Common myeloid progenitor, CD34-positive (primary cell): ENCODE measurements at regions of chr3 and their contacts with region 1.

Region 1: DNA sequence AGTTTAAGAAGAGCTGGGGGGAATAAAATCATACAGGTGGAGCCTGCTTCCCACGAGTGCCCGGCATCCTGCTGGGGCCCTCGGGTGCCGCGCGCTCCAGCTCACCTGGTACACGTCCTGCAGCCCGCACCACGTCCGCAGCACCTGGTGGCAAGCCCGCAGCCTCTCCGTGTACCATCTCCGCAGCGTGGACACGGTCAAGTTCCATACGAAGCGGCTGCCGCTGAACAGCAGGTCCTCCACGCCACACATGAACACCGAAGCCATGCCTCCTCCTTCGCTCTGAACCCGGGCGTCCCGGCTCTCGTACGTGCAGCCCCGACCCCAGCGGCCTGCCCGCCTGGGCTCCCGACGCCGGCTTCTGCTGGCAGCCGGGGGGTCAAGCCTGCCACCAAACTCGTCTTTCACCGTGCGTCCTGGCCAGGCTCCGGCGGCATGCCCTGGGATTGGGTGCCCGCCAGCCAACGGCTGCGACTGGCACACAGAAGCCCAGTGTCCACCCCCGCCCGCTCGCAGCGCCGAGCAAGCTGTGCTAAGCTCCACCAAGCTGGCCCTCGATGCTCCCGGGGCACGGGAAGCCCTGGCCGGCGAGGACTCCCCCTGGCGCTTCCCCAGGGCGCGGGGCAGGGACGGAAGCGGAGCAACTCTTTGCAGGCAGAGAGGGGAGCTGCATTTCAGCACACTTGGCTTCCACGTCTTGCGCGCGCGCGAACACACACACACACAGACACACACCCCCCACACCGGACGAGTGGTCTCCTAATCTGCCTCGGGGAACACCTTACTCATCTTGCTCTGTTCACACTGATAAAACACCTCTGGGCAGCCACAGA is at the start of gene FRMD4B:
- DNase-seq: peak; percentile 75 to 88 (median 78)
- H3K4me3 ChIP-seq: peak within 1 kb of the TSS; percentile 55 to 98 (median 86)
- H3K27ac ChIP-seq: peak within 1 kb of the TSS in 1 of 2 experiments; percentile 49
- H3K4me1 ChIP-seq: peaks cover 18 to 43% (median 36%) of the 10 kb centered on the region in 4 experiments
- H3K27me3 ChIP-seq: no peaks in the 10 kb centered on the region

Region 2: DNA sequence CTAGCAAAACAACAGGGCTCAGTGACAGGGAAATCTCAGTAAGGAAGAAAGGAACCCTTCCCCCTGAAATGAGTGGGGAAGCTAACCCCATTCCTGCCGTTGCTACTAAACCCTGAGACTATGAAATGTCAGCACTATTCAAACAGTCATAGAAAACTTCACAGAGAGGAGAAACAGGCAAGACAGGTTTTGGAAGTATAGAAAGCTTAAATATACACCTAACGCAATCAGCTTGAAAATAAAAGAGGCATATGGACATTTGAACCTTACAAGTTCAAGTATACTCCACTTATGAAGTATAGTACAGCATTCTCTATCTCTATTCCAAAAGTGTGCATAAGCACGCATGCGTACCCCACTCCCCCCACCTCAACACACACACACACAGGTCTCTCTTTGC is 17.5 kb after region 1 on chr3:
- CTCF ChIA-PET with region 1: interaction called, 34 read pairs
- POLR2A ChIA-PET with region 1: no interaction called
- DNase-seq: no peak
- H3K4me3 ChIP-seq: no peak overlapping the region
- H3K27ac ChIP-seq: no peak overlapping the region
- H3K4me1 ChIP-seq: peaks cover 0 to 2% (median 0%) of the 10 kb centered on the region in 4 experiments
- H3K27me3 ChIP-seq: no peaks in the 10 kb centered on the region

Region 3: DNA sequence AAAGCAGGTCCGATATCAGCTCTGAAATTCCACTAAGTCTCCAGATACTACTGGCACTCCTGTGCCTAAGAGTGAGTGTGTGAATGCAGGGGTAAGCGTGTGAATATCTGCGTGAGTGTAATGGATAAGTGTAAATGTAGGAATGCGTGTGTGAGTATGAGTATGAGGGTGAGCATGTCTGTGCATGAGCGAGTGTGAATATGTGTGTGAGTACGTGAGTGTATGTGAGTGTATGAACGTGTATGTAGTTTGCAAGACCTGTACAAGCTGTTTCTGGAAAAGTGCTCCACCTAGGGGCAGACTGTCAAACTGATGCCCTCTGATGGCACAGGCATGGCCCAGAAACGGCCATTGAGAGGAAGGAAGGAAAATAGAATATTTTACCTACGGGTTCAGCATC is 24.3 kb after region 1 on chr3:
- CTCF ChIA-PET with region 1: interaction called, 34 read pairs
- POLR2A ChIA-PET with region 1: no interaction called
- DNase-seq: peak; percentile 81 to 89 (median 86)
- H3K4me3 ChIP-seq: peak overlapping the region in 1 of 7 experiments; percentile 14
- H3K27ac ChIP-seq: no peak overlapping the region
- H3K4me1 ChIP-seq: peaks cover 0 to 14% (median 7%) of the 10 kb centered on the region in 4 experiments
- H3K27me3 ChIP-seq: no peaks in the 10 kb centered on the region